HAP-1 (cell line): ENCODE measurements at regions of chr10 and their contacts with region 1.

Region 1: GRCh38 chr10:118241229-118242137 is 100.6 kb downstream of the FAM204A start:
- DNase-seq: peak; percentile 71 to 84
- H3K4me3 ChIP-seq: no peak overlapping the region
- H3K4me1 ChIP-seq: no peaks in the 10 kb centered on the region
- H3K27me3 ChIP-seq: peaks cover 35% of the 10 kb centered on the region

Region 2: DNA sequence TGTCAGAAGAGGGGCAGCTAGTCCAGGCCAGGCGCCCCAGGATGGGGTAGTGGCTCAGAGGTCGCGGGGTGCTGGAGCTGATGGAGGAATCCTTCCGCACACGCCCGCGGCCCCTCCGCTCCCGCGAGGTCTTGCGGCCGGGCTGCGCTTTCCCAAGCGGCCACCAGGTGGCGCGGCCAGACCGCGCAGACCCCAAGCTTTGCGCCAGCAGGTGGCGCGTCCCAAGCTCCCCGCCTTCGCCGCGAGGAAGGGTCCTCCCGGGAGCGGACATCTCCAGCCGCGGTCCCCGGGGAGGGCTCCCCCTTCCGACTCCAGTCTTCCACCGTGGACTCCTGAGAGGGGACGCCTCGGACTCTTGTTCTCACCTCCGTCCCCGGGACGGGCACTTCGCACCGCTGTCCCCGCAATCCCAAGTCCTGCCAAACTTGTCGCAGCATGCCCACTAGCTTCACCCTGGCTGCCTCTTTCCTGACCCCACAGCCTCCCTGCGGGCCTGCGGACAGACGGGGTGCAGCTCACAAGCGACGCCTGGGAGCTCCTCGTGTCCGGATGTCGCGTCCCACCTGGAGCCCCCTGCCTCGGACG is 1024.8 kb before region 1 on chr10:
- in situ Hi-C with region 1: loop called (anchors 25 kb)
- DNase-seq: peak; percentile 68 to 86
- H3K4me3 ChIP-seq: peak overlapping the region; percentile 29
- H3K4me1 ChIP-seq: no peaks in the 10 kb centered on the region; the same call in 1 of the 2 replicates
- H3K27me3 ChIP-seq: peaks cover 2% of the 10 kb centered on the region; the same call in 1 of the 2 replicates

Region 3: GRCh38 chr10:117541909-117542705 is 699.4 kb before region 1 on chr10:
- in situ Hi-C with region 1: loop called (anchors 5 kb)
- DNase-seq: no peak
- H3K4me3 ChIP-seq: no peak overlapping the region
- H3K4me1 ChIP-seq: no peaks in the 10 kb centered on the region
- H3K27me3 ChIP-seq: peaks cover 7% of the 10 kb centered on the region; the same call in 1 of the 2 replicates

Region 4: GRCh38 chr10:117860823-117861222 is 380.7 kb before region 1 on chr10:
- in situ Hi-C with region 1: loop called (anchors 25 kb)
- DNase-seq: peak in 1 of 2 experiments; percentile 45
- H3K4me3 ChIP-seq: no peak overlapping the region
- H3K4me1 ChIP-seq: no peaks in the 10 kb centered on the region
- H3K27me3 ChIP-seq: no peaks in the 10 kb centered on the region

Region 5: GRCh38 chr10:118062798-118063238 is 178.7 kb before region 1 on chr10:
- in situ Hi-C with region 1: no loop called
- DNase-seq: no peak
- H3K4me3 ChIP-seq: no peak overlapping the region
- H3K4me1 ChIP-seq: no peaks in the 10 kb centered on the region
- H3K27me3 ChIP-seq: no peaks in the 10 kb centered on the region

Region 6: GRCh38 chr10:118712930-118713634 is 471.6 kb after region 1 on chr10:
- in situ Hi-C with region 1: no loop called
- DNase-seq: peak in 1 of 2 experiments; percentile 23
- H3K4me3 ChIP-seq: no peak overlapping the region
- H3K4me1 ChIP-seq: peaks cover 8% of the 10 kb centered on the region
- H3K27me3 ChIP-seq: no peaks in the 10 kb centered on the region